ENCODE measurements at regions of chr3 and their contacts with region 1.

Region 1: DNA sequence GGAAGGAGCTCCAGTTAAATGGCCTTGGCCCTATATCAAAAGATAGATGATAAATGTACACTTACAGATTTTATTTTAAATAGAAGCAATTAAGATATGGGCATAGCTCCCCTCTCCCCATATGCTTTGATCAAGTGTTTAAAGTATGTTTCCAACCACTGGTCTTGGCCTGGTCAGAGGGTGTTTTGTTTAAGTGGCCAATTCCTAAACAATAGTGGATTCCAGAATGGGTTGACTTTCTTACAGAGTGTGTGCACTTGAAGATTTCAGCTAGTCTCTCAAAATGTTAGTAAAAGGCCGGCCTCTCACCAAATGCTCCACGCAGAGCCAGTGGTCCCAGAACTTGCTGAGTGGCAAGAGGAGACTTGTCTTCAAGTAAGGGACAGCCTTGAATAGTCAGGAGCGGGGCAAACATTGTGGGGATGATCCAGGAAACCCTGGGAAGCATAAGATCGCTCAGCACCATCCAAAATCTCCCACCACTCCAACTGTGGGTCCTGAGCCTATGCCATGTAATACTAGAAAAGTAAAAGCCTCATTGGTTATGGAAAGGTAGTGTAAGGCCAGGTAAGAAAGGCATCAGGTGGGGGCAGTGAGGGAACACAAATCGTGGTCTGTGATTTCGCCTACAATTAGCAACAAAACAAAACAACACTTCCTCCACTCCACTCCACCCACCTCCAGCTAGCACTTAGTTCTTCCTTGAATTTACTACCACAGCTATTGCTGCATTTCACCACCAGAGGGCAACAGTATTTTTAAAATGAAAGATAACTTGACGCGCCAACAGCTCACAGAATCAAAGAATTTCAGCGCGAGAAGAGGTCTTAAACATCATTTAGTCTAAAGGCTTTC is 4.8 kb downstream of the RARRES1 start:
- DNase-seq: peak; percentile 42
- H3K4me3 Mint-ChIP-seq: peak overlapping the region; percentile 46
- H3K27ac Mint-ChIP-seq: peak overlapping the region; percentile 33
- H3K4me1 Mint-ChIP-seq: peaks cover 30% of the 10 kb centered on the region
- H3K27me3 Mint-ChIP-seq: no peaks in the 10 kb centered on the region

Region 2: GRCh38 chr3:158488670-158489069 is 238.8 kb before region 1 on chr3:
- CTCF ChIA-PET with region 1: no interaction called
- POLR2A ChIA-PET with region 1: no interaction called
- intact Hi-C with region 1: no loop called
- DNase-seq: no peak
- H3K4me3 Mint-ChIP-seq: no peak overlapping the region
- H3K27ac Mint-ChIP-seq: no peak overlapping the region
- H3K4me1 Mint-ChIP-seq: no peaks in the 10 kb centered on the region
- H3K27me3 Mint-ChIP-seq: no peaks in the 10 kb centered on the region

Region 3: DNA sequence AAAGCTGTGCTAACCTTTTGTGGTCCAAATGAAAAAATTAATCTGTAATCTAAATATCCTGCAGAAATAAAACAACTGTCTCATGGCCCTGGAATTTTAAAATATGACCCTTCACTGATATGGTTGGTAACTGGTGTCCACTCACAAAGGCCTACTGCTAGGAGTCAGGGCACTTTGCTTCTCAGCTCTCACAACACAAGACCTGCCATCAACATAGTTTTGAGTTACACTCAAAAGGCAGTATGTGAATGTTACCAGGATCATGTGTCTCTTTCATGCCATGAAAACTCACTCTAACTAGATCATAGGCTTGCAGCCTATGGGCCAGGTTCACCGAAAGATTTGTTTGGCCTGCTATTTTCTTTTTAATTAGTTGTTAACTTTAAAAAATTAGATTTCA is 166.5 kb before region 1 on chr3:
- CTCF ChIA-PET with region 1: no interaction called
- POLR2A ChIA-PET with region 1: no interaction called
- intact Hi-C with region 1: no loop called
- DNase-seq: no peak
- H3K4me3 Mint-ChIP-seq: no peak overlapping the region
- H3K27ac Mint-ChIP-seq: no peak overlapping the region
- H3K4me1 Mint-ChIP-seq: no peaks in the 10 kb centered on the region
- H3K27me3 Mint-ChIP-seq: peaks cover 8% of the 10 kb centered on the region

Region 4: DNA sequence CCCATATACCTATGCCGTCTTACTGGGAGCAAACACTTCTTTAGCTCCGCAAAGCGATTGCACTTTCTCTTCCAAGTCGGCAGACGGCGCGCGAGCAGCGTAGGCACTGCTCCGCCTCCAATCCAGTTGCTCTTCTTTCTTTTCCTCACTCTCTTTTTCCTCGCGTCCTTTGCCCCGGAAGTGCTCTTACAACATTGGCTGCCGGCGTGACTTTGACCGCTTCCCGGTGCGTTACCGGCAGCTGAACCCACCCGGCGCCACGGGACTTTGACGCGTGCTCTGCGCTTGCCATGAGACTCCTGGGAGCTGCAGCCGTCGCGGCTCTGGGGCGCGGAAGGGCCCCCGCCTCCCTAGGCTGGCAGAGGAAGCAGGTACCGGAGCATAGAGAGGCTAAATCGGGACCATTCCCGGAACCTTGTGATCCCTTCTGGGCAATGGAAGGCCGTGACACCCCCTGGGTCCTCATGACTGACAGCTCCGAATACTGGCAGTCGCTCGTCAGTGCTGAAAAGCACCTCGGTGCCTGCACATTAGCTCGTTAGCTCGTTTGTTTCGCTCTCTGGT is 83.0 kb before region 1 on chr3 and contains the start of gene GFM1:
- CTCF ChIA-PET with region 1: interaction called, 17 read pairs
- POLR2A ChIA-PET with region 1: interaction called, 4 read pairs
- intact Hi-C with region 1: loop called (anchors 5 kb)
- DNase-seq: peak; percentile 93
- H3K4me3 Mint-ChIP-seq: peak within 1 kb of the TSS; percentile 89
- H3K27ac Mint-ChIP-seq: peak within 1 kb of the TSS; percentile 86
- H3K4me1 Mint-ChIP-seq: peaks cover 38% of the 10 kb centered on the region
- H3K27me3 Mint-ChIP-seq: no peaks in the 10 kb centered on the region
- total RNA-seq, gene GFM1: 48.7 to 57.3 TPM

Region 5: DNA sequence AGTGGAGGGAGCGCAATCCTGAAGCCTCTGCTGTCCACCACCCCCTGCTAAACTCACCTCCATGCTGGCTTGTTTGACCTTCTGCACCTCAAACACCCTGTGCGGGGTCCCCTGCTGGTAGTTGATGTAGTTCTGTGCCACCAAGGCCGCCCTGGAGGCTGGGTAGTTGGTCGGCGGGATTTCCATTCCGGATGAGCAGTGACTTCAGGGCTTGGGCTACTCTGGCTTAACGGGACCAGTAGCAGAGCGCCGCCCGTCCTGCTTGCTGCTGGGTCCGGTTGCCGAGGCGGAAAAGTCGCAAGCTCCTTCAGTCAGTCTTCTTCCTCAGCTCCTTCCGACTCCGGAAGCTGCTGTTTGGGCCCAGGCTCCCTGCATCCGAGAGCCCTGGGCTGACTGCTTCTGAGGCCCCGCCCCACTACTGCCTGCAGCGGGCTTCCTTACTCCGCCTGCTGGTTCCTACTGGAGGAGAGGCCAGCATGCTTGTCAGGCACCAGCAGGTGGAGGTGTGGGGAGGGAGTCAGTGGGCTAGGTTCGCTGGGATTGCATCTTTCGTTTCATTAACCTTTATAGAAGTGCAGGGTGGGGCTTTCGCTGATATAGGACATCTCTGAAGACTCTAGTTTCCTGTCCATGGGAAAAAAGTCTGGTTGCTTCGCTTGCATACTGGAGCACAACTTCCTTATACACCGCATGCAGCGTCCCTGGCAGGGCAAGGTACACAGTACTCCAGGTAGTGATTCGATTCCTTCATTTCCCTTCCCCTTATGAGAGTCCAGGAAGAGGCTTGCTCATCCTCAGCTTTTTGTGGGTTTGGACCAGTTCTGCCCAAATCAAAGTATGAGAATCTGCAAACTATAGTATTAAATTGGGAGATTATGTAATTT is 54.9 kb before region 1 on chr3 and contains the start of gene LXN:
- CTCF ChIA-PET with region 1: interaction called, 3 read pairs
- POLR2A ChIA-PET with region 1: no interaction called
- intact Hi-C with region 1: loop called (anchors 1 kb)
- DNase-seq: peak; percentile 90
- H3K4me3 Mint-ChIP-seq: peak within 1 kb of the TSS; percentile 90
- H3K27ac Mint-ChIP-seq: peak within 1 kb of the TSS; percentile 92
- H3K4me1 Mint-ChIP-seq: peaks cover 12% of the 10 kb centered on the region
- H3K27me3 Mint-ChIP-seq: no peaks in the 10 kb centered on the region
- total RNA-seq, gene LXN: 8.1 to 8.6 TPM

Region 6: DNA sequence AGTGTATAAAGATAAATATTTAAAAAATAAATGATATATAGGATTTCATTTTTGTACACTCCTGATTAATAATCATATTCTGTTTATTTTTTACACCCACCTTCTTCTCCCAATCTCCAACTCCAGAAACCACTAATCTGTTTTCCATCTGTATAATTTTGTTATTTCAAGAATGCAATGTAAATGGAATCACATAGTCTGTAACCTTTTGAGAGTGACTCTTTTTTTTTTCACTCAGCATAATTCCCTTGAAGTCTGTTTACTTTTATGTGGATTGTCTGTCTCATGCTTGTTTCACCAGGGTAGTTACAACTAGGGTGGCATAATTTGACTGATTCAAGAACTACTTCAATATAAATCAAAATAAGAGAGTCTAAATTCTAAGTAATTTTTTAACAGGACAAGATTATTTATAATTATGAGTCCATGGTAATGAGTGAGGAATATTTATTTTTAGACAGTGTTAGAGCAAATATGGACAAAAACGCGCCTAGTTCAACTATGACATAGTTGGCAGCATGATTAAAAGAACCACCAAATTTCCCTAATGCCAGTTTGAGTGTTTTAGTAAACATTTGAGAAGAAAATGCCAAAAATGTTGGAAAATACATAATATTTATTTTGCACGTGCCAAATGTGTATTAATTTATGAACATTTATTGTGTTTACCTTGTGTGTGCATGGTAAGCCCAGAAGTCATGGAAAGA is 55.0 kb after region 1 on chr3:
- CTCF ChIA-PET with region 1: interaction called, 10 read pairs
- POLR2A ChIA-PET with region 1: no interaction called
- intact Hi-C with region 1: no loop called
- DNase-seq: no peak
- H3K4me3 Mint-ChIP-seq: no peak overlapping the region
- H3K27ac Mint-ChIP-seq: no peak overlapping the region
- H3K4me1 Mint-ChIP-seq: no peaks in the 10 kb centered on the region
- H3K27me3 Mint-ChIP-seq: no peaks in the 10 kb centered on the region

Region 7: DNA sequence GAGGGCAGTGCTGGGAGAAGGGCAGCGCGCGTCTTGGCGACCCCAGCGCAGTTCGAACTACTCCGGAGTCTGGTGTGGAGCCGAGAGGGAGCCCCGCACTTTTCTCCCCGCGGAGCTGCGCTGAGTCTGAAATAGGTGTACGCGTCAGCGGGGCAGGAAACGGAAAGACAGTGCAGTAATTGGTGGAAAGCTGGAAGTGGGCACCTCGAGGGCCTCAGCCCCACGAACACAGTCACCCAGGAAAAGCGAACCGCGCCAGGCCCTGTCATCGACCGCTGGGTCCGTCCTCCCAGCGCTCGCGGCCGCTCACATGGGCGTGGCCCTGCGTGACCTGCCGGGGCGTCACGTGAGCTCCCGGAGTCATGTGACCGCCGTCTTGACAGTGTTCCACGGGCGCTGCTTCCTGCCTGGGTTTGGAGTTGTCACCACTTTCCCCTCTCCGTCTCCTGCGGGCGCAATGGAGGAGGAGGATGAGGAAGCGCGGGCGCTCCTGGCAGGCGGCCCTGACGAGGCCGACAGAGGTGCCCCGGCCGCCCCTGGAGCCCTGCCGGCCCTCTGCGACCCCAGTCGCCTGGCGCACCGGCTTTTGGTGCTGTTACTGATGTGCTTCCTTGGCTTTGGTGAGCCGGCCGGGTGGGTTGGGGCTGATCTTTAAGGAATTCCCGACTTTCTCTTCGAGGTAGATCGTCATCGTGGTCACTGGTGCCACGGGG is 74.4 kb after region 1 on chr3 and contains the start of gene MFSD1:
- CTCF ChIA-PET with region 1: interaction called, 176 read pairs
- POLR2A ChIA-PET with region 1: interaction called, 3 read pairs
- intact Hi-C with region 1: no loop called
- DNase-seq: peak; percentile 95
- H3K4me3 Mint-ChIP-seq: peak within 1 kb of the TSS; percentile 86
- H3K27ac Mint-ChIP-seq: peak within 1 kb of the TSS; percentile 87
- H3K4me1 Mint-ChIP-seq: peaks cover 23% of the 10 kb centered on the region
- H3K27me3 Mint-ChIP-seq: no peaks in the 10 kb centered on the region
- total RNA-seq, gene MFSD1: 11.9 to 12.4 TPM

Measured in activated CD4-positive, alpha-beta memory T cell treated with anti-CD3 and anti-CD28 coated beads for 36 hours (primary cell).